Motor neuron (in vitro differentiated cells): ENCODE measurements at regions of chr1 and their contacts with region 1.

Region 1: GRCh38 chr1:204989266-204990058 is 53.5 kb upstream of the CNTN2 start:
- ATAC-seq: peak; percentile 95 to 97 (median 96)
- H3K4me3 ChIP-seq: no peak overlapping the region
- H3K27ac ChIP-seq: no peak overlapping the region
- H3K4me1 ChIP-seq: peaks cover 21 to 30% of the 10 kb centered on the region in 2 donors

Region 2: DNA sequence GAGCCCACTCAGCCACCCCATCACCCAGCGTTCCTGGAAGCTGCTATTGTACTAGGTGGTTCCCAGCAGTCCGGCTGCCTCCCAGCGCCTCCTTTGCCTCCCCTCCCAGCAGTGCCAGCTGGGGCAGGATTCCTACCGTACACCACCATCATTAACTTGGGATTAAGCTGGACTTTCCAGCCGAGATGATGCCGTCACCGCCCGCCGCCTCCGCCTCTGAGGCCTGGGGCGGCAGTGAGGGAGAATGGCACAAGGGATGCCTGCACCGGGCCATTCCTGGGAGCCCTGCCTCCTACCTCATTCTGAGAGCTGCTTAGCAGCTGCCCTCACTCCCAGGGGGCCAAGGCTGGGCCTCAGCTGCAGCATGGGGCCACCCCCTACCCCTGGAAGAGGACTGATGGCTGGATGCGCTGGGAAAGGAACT is 66.7 kb after region 1 on chr1:
- in situ Hi-C with region 1: loop called in 5 of 9 experiments (anchors 5 to 10 kb)
- ATAC-seq: peak in 6 of 8 experiments; percentile 37 to 90 (median 88)
- H3K4me3 ChIP-seq: no peak overlapping the region
- H3K27ac ChIP-seq: peak overlapping the region; percentile 14 to 38
- H3K4me1 ChIP-seq: peaks cover 45 to 51% of the 10 kb centered on the region in 2 donors

Region 3: GRCh38 chr1:205061665-205062069 is 72.2 kb after region 1 on chr1:
- in situ Hi-C with region 1: loop called in 5 of 9 experiments (anchors 5 to 10 kb)
- ATAC-seq: peak; percentile 67 to 89 (median 78)
- H3K4me3 ChIP-seq: no peak overlapping the region
- H3K27ac ChIP-seq: no peak overlapping the region
- H3K4me1 ChIP-seq: peaks cover 13 to 22% of the 10 kb centered on the region in 2 donors

Region 4: DNA sequence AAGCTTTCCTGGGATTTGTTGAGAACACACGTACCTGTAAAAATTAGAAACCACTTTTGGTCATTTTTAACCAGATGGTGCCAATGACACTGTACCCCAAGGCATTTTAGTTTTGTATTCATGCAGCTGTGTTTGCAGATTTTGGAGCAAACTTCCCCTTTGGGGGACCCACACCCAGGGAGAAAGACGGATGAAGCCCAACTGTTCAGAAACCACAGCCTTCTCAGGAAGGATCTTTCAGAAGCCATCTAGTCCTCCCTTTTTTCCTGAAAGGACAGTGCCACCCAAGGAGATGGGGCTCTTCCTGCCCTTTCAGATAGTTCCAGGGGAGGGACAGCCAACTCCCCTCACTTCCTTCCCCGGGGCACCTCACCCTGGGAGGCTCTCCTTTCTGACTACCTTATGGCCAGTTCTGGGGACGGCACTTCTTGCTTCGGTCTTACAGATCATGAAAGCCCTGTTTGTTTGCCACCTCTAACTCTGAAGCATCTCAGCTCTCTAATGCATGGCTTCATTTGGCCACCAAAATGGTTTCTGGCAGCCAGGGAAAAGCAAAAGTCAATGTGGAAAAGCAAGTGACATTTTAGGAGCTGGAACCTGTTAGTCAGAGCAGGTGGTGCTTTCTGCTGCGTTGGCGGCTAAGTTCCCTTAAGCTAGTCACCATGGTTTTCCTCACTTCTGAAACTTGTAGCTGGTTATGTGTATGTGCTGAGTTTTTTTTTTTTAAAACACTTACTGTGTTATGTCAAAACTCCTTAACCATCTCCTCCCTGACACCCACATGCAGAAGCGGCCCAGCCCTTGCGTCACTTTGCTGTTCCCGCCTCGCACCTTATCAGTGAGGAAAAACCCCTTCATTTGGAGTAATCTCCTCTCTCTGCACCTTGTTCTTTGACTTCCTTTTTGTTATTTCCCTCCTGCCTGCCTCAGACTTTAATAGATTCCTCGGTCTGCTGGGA is 248.3 kb after region 1 on chr1:
- in situ Hi-C with region 1: no loop called
- ATAC-seq: no peak
- H3K4me3 ChIP-seq: no peak overlapping the region
- H3K27ac ChIP-seq: no peak overlapping the region
- H3K4me1 ChIP-seq: peaks cover 0 to 12% of the 10 kb centered on the region in 2 donors

Region 5: GRCh38 chr1:205255941-205256780 is 266.7 kb after region 1 on chr1:
- in situ Hi-C with region 1: loop called in 5 of 9 experiments (anchors 10 to 25 kb)
- ATAC-seq: peak; percentile 48 to 89 (median 79)
- H3K4me3 ChIP-seq: no peak overlapping the region
- H3K27ac ChIP-seq: peak overlapping the region; percentile 40 to 57
- H3K4me1 ChIP-seq: peaks cover 25 to 36% of the 10 kb centered on the region in 2 donors

Region 6: GRCh38 chr1:205273551-205273982 is 284.1 kb after region 1 on chr1:
- in situ Hi-C with region 1: loop called in 4 of 9 experiments (anchors 25 kb)
- ATAC-seq: peak; percentile 62 to 96 (median 80)
- H3K4me3 ChIP-seq: no peak overlapping the region
- H3K27ac ChIP-seq: no peak overlapping the region
- H3K4me1 ChIP-seq: peaks cover 25 to 28% of the 10 kb centered on the region in 2 donors